ENCODE measurements at regions of chr5 and their contacts with region 1.

Region 1: GRCh38 chr5:82922086-82922734 is 155.0 kb downstream of the TMEM167A start:
- DNase-seq: no peak

Region 2: GRCh38 chr5:82839881-82840280 is 82.3 kb before region 1 on chr5:
- intact Hi-C with region 1: loop called (anchors 5 kb)
- DNase-seq: no peak

Region 3: GRCh38 chr5:83104021-83104420 is 181.8 kb after region 1 on chr5:
- intact Hi-C with region 1: no loop called
- DNase-seq: no peak

Region 4: DNA sequence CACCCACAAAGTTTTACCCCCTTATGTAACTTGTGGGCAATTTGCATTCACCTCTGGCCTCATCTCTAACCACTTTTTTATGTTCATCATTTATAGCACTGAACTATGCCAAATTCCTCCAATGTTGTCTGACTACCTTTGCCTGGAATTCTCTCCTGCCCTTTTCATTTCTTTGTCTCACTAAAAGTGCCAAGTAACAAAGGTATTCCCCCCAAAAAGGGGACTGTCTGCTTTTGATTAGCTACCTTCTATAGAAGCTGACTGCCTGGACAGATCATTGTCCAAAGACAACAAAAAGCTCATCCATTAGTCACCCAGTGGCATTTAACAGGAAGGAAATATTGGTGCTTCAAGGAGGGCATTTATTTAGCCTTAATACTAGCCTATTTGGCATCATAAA is 359.4 kb after region 1 on chr5:
- intact Hi-C with region 1: no loop called
- DNase-seq: no peak